Dendritic cell treated with granulocyte-macrophage colony-stimulating factor and Interleukin-4, amounts not matched to agents 40 ng/mL and 50 ng/mL, for 4 days (primary cell): ENCODE measurements at regions of chr19 and their contacts with region 1.

Region 1: DNA sequence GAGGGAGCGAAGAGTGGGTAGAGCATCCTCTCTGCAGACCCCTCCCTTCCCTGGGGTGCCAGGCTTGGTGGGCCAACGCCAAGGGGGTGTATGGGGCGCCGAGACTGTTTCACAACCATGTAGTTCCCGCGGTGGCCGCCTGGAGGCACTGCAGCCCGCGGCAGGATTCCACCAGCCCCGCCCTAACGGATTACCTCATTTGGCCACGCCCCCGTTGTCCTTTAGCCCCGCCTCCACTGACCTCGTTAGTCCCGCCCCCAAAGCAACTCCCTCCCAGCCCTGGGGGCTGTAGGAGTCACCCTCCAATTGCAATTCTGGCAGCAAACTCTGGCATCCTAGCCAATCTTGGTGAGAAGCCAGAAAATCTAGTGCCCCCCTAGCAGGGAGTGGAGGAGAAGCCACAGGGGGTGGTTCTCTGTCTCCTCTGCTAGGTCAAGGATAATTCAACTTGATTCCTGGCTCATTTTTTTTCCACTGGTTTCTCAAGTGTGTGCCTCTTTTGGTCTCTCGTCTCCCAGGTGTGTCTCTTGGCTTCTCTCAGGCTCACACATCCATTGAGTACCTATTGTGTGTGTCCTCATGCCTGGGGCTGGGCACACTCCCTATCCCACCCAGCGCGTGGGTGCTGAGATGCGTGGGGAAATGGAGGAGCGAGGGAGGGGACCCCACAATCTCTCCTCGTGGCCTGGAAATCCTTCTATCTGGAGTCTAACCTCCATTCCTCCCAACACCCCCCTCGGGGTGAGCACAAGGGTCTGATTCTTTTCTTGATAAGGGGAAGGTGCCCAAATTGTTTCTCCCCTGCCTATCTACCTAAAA is 2.0 kb downstream of the OLFM2 start:
- H3K4me3 Mint-ChIP-seq: no peak overlapping the region
- H3K27ac Mint-ChIP-seq: no peak overlapping the region
- H3K4me1 Mint-ChIP-seq: peaks cover 26% of the 10 kb centered on the region
- H3K27me3 Mint-ChIP-seq: peaks cover 66% of the 10 kb centered on the region

Region 2: DNA sequence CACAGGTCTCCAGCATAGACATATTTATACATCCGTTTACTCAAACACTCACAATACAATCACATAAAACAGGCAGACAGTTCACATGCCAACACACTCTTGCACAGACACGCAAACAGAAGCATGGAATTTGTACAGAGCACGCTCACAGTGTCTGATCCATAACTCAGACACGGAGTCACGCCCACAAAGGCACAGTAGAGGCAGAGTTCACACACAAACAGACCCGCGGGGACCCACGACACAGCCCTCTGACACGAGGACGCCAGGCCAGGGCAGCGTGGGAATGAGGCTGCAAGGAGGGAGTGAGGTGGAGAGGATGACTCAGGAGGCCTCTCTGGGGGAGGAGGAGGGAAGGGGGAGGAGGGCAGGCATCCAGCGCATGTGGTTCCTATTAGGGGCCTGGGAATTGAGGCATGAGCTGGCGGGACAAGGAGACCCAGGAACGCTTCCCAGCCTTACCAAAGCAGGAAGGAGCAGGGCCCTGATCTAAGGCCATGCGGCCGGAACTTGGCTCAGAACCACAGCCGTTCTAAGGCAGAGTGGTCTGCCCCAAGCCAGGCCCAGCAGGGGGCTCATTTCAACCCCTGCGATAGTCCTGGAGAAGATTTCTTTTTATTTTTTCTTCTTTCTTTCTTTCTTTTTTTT is 11.1 kb after region 1 on chr19:
- intact Hi-C with region 1: no loop called
- H3K4me3 Mint-ChIP-seq: no peak overlapping the region
- H3K27ac Mint-ChIP-seq: no peak overlapping the region
- H3K4me1 Mint-ChIP-seq: peaks cover 7% of the 10 kb centered on the region
- H3K27me3 Mint-ChIP-seq: peaks cover 13% of the 10 kb centered on the region

Region 3: DNA sequence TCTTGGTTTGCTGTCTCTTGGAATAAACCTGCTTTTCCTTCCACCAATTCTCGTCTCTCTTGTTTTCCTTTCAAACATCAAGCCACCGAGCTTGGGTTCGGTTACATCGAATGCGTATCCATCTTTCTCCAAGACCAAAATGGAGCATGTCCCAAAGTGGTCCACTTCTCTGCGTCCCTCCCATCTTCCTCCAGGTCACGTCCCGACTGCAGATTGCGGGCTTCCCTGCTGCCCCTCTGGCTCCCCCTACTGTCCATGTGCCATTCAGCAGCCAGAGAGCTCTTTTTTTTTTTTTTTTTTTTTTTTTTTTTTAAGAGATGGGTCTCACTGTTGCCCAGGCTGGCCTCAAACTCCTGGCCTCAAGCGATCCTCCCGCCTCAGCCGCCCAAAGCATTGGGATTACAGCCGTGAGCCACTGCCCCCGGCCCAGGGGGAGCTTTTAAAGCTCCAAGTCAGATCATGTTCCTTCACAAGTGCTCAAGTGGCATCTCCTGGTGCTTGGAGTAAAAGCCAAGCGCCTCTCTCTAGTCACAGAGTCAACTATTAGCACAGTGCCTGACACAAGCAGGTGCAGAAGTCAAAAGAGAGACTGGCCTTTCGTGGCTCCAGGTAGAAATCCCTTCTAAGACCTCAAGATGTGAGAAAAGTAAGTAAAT is 66.0 kb after region 1 on chr19:
- intact Hi-C with region 1: loop called (anchors 2 kb)
- H3K4me3 Mint-ChIP-seq: no peak overlapping the region
- H3K27ac Mint-ChIP-seq: no peak overlapping the region
- H3K4me1 Mint-ChIP-seq: no peaks in the 10 kb centered on the region
- H3K27me3 Mint-ChIP-seq: peaks cover 31% of the 10 kb centered on the region

Region 4: DNA sequence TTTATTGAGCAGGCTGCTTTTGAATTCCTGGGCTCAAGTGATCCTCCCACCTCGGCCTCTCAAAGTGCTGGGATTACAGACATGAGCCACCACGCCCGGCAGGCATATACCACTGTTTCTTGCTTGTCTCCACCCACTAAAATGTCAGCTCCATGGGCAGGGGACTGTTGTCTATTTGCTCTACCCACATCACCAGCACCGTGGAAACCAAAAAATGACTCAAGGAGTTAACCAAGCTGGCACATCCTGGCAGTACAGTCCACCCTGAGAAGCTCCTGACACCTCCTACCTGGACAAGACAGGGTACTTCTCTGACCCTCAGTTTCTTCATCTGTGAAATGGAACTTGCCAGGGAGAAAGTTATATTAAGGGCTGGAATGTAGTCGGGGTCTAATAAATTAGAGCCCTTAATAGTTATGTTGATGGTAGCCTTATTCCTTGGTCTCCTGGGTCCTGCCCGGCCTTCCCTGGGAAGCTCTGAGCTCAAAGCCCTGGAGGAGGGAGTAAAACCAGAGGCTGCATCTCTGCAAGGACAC is 92.9 kb after region 1 on chr19:
- intact Hi-C with region 1: loop called (anchors 1 kb)
- H3K4me3 Mint-ChIP-seq: no peak overlapping the region
- H3K27ac Mint-ChIP-seq: no peak overlapping the region
- H3K4me1 Mint-ChIP-seq: no peaks in the 10 kb centered on the region
- H3K27me3 Mint-ChIP-seq: peaks cover 21% of the 10 kb centered on the region

Region 5: DNA sequence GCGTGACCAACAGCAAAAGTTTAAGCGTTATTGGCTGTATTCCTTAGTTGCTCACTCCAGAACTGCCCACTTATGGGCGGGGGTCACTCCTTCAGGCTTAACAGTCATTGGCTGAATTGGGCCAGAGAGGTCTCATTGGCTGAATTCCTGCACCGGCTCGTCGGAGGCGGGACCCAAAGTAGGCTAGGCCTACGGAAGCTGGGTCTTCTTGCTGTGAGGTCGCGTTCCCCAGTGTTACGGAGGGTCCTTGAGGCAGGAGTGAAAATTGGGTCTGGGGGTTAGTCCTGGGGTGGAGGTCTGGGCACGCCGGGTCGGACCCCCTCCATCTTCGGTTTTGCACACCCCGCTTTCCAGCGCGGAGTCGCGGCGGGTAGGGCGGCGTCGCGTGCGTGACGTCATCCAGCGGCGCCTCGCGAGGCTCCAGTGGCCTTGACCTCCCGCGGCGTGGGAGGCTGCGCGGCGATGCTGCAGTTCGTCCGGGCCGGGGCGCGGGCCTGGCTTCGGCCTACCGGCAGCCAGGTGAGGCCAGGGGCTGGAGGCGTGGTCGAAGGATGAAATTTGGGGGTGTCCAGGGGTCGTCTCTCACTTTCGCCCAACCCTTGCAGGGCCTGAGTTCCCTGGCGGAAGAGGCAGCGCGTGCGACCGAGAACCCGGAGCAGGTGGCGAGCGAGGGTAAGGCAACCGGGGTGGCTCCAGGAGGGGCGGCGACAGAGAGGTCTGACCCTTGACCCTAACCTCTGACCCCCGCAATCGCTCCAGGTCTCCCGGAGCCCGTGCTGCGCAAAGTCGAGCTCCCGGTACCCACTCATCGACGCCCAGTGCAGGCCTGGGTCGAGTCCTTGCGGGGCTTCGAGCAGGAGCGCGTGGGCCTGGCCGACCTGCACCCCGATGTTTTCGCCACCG is 317.7 kb after region 1 on chr19 and contains the start of gene MRPL4:
- intact Hi-C with region 1: loop called (anchors 2 kb)
- H3K4me3 Mint-ChIP-seq: peak within 1 kb of the TSS; percentile 90
- H3K27ac Mint-ChIP-seq: peak within 1 kb of the TSS; percentile 98
- H3K4me1 Mint-ChIP-seq: peaks cover 40% of the 10 kb centered on the region
- H3K27me3 Mint-ChIP-seq: no peaks in the 10 kb centered on the region

Region 6: DNA sequence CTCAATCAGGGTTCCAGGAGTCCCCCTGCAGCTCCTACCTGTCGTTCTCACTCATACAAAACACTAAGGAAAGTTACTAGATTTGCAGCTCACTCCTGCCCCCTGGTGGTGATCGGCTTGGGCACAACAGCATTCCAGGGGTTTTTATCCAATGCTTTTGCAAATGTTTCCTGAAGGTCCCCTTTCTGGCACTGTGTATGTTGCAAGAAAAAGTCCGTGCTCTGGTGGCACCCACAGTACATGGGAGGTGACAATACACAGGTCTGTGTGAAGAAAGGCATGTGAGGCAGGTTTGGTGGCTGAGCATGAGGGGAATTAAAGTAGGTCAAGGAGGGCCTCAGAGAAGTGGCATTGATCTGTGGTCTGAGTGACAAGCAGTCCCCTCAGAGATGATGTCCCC is 454.6 kb after region 1 on chr19:
- intact Hi-C with region 1: loop called (anchors 5 kb)
- H3K4me3 Mint-ChIP-seq: no peak overlapping the region
- H3K27ac Mint-ChIP-seq: no peak overlapping the region
- H3K4me1 Mint-ChIP-seq: peaks cover 12% of the 10 kb centered on the region
- H3K27me3 Mint-ChIP-seq: no peaks in the 10 kb centered on the region